Transverse colon (tissue), 4 donors: ENCODE measurements at regions of chr1 and their contacts with region 1.

Region 1: GRCh38 chr1:53934170-53934765 is 11.2 kb downstream of the IFT25 start:
- DNase-seq: no peak
- H3K4me3 ChIP-seq: no peak overlapping the region
- H3K27ac ChIP-seq: no peak overlapping the region
- H3K4me1 ChIP-seq: no peaks in the 10 kb centered on the region
- H3K27me3 ChIP-seq: no peaks in the 10 kb centered on the region
- CTCF ChIP-seq: no peak
- EP300 ChIP-seq: no peak
- POLR2A ChIP-seq: no peak

Region 2: DNA sequence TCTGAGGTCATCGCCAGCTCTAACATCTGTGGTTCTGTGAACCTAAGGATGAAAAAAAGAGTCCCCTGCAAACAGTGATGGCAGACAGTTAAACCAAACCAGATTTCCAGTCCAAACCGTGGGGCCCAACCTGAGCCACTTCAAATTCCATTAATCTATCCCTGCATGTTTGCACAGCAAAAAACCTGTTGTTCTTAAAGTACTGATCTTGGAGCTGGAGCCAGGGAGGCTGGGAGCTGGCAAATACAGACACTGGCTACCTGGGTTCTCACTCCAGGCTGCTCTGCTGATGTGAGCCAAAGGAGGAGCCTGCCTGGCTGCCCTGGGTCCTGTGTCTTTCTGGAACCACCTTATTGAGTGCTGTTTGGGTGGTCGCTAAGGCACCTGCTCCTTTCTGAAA is 67.3 kb after region 1 on chr1:
- in situ Hi-C with region 1: no loop called
- intact Hi-C with region 1: loop called (anchors 2 kb)
- DNase-seq: no peak
- H3K4me3 ChIP-seq: no peak overlapping the region
- H3K27ac ChIP-seq: no peak overlapping the region
- H3K4me1 ChIP-seq: no peaks in the 10 kb centered on the region
- H3K27me3 ChIP-seq: no peaks in the 10 kb centered on the region
- CTCF ChIP-seq: no peak
- EP300 ChIP-seq: no peak
- POLR2A ChIP-seq: no peak